Activated B cell treated with CpG ODN at 0.5 μM for 24 hours (primary cell): ENCODE measurements at regions of chr5 and their contacts with region 1.

Region 1: DNA sequence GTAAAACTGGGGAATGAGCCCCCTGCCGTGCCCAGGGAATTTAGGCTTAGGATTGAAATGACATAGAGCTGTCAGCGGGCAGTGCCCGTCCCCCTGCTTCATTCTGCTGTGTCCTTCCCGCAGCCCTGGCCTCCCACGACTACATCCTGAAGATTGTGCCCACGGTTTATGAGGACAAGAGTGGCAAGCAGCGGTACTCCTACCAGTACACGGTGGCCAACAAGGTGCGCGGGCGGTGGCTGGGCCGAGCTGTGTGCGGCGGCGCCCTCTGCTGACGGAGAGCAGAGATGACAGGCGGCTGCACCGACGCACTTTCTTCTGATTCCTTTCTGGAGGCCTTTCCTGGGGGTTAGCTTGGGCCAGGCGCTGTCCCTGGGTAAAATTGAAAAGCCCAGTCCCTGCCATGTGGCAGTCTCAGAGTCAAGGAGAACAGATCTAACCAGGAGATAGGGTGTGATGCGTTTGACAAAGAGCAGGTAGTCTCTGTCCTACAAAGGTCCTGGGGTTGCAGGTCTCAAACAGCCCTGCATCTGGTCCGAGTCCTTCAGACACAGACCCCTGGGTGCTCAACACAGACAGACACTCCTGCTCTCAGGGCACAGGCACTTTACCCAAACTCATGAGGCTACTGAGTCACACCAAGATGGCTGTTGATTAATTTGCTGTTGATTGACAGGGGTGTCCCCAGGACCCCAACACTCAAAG is 26.8 kb upstream of the RPL26L1 start:
- DNase-seq: peak; percentile 58
- ATAC-seq: peak; percentile 92
- H3K4me3 Mint-ChIP-seq: no peak overlapping the region
- H3K27ac Mint-ChIP-seq: no peak overlapping the region
- H3K4me1 Mint-ChIP-seq: peaks cover 17% of the 10 kb centered on the region
- H3K27me3 Mint-ChIP-seq: no peaks in the 10 kb centered on the region
- CTCF ChIP-seq: peak; percentile 81

Region 2: DNA sequence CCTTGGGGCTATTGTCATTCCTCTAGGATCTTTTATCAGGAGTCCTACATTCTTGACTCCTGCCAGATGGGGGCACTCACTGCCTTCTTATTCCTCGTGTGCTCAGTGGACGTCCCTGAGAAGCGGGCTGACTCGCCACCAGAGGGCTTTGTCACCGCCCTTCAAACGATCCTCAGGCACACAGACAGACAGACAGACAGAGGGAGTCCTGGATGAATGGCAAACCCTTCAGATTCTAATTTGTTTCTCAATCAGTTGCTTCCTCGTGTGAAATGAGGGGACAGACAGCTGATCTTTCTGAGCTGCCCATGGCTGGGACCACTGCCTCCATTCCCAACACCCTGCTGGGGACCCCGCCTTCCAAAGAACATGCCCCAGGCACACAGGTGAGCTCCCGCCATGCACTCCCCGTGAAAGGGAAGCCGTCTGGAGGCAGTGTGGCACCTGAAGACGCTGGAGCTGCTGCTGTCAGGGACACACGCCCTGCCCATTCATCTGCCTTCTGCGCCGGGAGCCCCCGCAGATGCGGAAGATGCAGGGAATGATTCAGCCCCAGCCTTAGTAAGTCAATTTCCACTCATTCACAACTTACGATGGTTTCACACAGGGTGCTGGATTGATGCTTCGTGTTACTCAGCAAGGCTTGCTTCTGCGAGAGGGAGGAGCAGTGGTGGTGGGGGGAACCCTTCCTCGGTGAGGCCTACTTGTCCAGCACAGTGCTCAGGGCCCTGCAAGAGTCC is 453.3 kb before region 1 on chr5:
- CTCF ChIA-PET with region 1: no interaction called
- POLR2A ChIA-PET with region 1: no interaction called
- intact Hi-C with region 1: loop called (anchors 5 kb)
- DNase-seq: no peak
- ATAC-seq: peak; percentile 80
- H3K4me3 Mint-ChIP-seq: no peak overlapping the region
- H3K27ac Mint-ChIP-seq: no peak overlapping the region
- H3K4me1 Mint-ChIP-seq: no peaks in the 10 kb centered on the region
- H3K27me3 Mint-ChIP-seq: peaks cover 6% of the 10 kb centered on the region
- CTCF ChIP-seq: no peak

Region 3: GRCh38 chr5:172637122-172637580 is 295.3 kb before region 1 on chr5:
- CTCF ChIA-PET with region 1: no interaction called
- POLR2A ChIA-PET with region 1: no interaction called
- intact Hi-C with region 1: no loop called
- DNase-seq: no peak
- ATAC-seq: no peak
- H3K4me3 Mint-ChIP-seq: no peak overlapping the region
- H3K27ac Mint-ChIP-seq: no peak overlapping the region
- H3K4me1 Mint-ChIP-seq: peaks cover 9% of the 10 kb centered on the region
- H3K27me3 Mint-ChIP-seq: peaks cover 19% of the 10 kb centered on the region
- CTCF ChIP-seq: no peak

Region 4: DNA sequence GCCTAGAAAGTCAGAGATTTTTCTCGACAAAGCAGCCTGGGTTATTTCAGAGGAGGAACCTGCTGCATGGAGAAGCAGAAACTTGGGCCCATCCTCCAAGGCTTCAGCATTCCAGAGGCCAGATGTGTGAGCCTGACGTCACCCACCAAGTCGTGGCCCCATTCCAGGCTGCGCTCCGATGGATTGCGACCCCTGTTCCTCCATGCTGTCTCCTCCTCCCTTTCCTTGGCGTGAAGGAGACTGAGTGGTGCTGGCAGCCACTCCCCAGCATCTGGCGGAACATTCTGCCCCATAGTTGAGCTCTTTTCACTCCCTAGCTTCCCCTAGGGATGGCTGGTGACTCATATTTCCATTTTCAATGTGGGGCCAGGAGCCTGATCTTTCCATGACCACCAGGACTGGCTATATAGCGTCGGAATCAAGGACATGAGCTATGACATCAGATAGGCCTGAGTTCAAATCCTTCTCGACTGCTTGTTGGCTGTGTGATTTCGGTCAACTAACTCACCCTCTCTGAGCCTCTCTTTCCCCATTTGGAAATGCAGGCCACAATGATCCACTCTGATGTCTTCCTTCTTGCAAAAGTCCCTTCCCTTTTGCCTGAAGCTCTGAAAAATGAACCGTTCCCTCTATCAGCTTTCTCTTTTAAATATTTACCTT is 137.0 kb before region 1 on chr5:
- CTCF ChIA-PET with region 1: no interaction called
- POLR2A ChIA-PET with region 1: no interaction called
- intact Hi-C with region 1: no loop called
- DNase-seq: no peak
- ATAC-seq: no peak
- H3K4me3 Mint-ChIP-seq: no peak overlapping the region
- H3K27ac Mint-ChIP-seq: no peak overlapping the region
- H3K4me1 Mint-ChIP-seq: peaks cover 16% of the 10 kb centered on the region
- H3K27me3 Mint-ChIP-seq: no peaks in the 10 kb centered on the region
- CTCF ChIP-seq: no peak

Region 5: DNA sequence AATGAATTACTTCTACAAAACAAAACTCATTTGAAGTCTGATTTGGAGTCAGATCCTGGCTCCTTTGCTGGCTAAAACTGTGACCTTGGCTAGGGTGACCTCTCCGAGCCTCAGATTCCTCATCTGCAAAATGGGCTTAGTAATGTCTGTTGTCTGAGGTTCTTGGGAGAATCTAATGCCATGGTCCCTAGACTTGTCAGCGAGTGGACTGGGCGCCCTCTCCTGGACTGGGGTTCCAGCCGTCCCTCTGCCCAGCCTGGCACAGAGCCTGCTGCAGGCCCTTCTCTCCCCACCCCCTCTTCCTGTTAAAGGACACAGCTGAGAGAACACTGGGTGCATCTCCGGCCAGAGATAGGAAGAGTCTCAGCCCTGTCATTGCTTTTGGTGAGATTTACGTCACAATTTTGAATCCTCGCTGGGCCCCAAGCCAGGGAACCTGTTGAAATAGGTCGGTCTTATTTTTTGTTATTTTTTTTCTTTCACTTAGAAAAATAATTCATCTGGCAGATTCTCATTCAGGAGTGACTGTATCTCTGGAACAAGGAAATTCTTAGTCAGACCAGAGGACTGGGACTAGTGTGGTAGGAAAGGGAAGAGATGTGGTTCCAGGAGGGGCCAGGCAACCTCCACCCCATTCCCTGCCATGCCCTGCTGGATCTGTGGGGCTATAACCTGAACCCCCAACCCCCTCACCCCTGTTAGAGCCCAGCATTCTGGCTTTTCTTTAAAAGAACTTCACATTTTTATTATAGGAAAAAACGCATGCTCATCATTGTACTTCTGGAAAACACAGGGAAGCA is 21.4 kb before region 1 on chr5:
- CTCF ChIA-PET with region 1: interaction called, 6 read pairs
- POLR2A ChIA-PET with region 1: no interaction called
- intact Hi-C with region 1: loop called (anchors 1 kb)
- DNase-seq: peak; percentile 23
- ATAC-seq: peak; percentile 76
- H3K4me3 Mint-ChIP-seq: peak overlapping the region; percentile 25
- H3K27ac Mint-ChIP-seq: peak overlapping the region; percentile 86
- H3K4me1 Mint-ChIP-seq: peaks cover 25% of the 10 kb centered on the region
- H3K27me3 Mint-ChIP-seq: no peaks in the 10 kb centered on the region
- CTCF ChIP-seq: no peak